HCT116 (cell line): ENCODE measurements at regions of chr7 and their contacts with region 1.

Region 1: DNA sequence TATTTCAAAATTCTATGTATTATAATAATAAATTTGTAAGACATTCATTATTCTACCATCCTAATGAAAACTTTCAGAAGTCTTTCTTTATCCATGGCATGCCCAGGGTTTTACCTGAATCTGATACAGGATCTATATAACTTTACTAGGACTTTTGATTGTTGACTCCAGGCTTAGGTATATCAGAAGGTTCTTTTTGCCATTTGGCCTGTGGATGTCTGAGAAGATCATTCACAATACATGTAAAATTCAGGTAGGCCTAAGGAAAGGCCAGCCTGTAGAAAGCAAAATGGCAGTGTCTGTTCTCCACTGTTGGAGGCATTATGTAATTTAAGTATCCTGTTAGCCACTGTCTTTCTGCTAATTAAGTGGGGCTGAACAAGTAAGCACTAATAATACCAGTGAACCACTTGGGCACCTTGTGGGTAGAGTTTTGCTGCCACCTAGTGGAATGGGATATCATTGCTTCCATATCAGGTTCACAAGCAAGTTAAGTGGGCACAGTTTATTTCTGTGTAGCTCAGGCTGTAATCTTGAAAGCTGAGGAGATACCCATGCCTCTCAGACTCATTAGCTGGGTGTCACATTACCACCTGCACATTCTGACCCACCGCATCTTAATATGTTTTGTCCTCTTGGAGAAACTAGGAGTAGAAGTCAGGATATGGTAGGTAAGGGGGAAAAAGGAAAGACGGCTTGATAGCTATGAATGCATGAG is 105.5 kb downstream of the SEPTIN7 start:
- DNase-seq: peak; percentile 66
- ATAC-seq: peak; percentile 96
- H3K4me3 ChIP-seq: no peak overlapping the region
- H3K27ac ChIP-seq: no peak overlapping the region
- H3K4me1 ChIP-seq: no peaks in the 10 kb centered on the region
- H3K27me3 ChIP-seq: no peaks in the 10 kb centered on the region
- CTCF ChIP-seq: peak; percentile 71 to 90 (median 82)
- POLR2A ChIP-seq: no peak
- RAD21 ChIP-seq: peak; percentile 93

Region 2: DNA sequence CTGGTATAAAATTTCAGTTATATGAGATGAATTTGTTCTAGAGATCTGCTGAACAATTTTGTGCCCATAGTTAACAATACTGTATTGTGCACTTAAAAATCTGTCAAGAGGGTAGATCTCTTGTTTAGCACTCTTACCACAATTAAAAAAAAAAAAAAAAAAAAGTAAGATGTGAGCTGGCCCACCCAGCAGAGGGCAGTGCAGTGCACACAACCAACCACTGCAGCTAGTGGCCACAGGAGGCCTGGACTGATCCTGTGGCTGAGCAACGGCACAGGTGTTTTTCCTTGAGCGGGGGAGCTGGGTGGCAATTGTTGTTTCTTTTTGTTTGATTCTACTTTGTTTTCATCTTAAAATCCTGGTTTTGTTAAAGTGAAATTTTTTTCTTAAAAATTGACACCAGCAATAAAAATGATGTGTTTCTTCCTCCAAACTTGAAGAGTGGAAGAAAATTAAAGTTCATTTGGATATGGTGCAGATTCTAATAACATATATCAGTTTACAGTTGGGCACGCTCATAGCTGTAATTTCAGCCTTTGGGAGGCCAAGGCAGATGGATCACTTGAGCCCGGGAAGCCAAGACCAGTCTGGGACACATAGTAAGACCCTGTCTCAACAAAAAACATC is 481.4 kb before region 1 on chr7:
- CTCF ChIA-PET with region 1: no interaction called
- POLR2A ChIA-PET with region 1: no interaction called
- RAD21 ChIA-PET with region 1: no interaction called
- intact Hi-C with region 1: loop called (anchors 2 kb)
- DNase-seq: peak; percentile 43
- ATAC-seq: peak; percentile 95
- H3K4me3 ChIP-seq: no peak overlapping the region
- H3K27ac ChIP-seq: no peak overlapping the region
- H3K4me1 ChIP-seq: no peaks in the 10 kb centered on the region
- H3K27me3 ChIP-seq: peaks cover 9% of the 10 kb centered on the region; the same call in 1 of the 2 replicates
- CTCF ChIP-seq: peak; percentile 81 to 86 (median 84)
- POLR2A ChIP-seq: no peak
- RAD21 ChIP-seq: peak; percentile 73

Region 3: DNA sequence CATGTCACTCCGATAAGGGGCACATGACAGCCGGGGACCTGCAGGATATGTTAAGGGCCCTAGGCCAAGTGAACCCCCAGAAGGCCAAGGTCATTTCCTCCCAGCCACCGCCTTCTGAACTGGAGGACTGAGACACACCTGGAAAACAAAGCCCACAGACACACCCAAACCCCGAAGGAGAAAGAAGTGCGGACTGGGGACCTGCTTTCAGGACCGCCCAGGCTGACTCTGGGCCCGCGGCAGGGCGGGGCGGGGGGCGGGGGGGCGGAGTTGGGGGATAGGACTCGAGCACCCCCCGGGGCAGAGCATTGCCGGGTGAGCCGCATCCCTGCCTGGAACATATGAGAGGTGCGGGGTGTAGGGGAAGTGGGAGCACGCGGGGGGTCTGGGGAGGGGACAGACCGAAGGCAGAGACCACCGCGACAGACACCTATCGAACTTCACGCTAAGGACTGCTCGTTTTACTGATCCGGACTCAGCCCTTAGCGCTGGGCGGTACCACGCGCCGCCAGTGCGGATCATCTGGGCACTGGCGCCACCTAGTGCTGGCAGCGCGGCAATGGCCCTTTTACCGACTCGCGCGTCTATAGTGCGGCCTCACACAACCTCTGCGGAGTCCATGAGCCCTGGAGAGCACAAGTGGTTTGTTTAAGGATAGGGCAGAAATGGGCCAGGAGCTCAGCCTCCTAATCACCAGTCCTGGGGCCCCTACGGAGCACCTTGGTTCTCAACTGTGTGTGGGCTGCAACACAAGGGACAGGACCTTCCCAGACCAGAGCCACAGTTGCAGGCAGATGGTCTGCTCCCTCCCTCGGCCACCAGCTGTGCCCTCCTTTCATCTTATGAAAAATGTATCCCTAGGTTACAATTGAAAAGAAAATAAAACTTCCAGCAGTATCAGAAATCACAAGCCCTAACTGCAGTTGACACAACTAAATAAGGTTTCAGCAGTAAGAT is 369.0 kb before region 1 on chr7:
- CTCF ChIA-PET with region 1: no interaction called
- POLR2A ChIA-PET with region 1: no interaction called
- RAD21 ChIA-PET with region 1: no interaction called
- intact Hi-C with region 1: loop called (anchors 2 kb)
- DNase-seq: peak; percentile 53
- ATAC-seq: peak; percentile 99
- H3K4me3 ChIP-seq: peak overlapping the region; percentile 28 to 40
- H3K27ac ChIP-seq: no peak overlapping the region
- H3K4me1 ChIP-seq: peaks cover 0 to 11% of the 10 kb centered on the region in 2 experiments; a peak in 1 of 4 replicates
- H3K27me3 ChIP-seq: no peaks in the 10 kb centered on the region
- CTCF ChIP-seq: peak; percentile 78 to 92 (median 91)
- POLR2A ChIP-seq: no peak
- RAD21 ChIP-seq: peak; percentile 88

Region 4: GRCh38 chr7:35624299-35625186 is 281.8 kb before region 1 on chr7:
- CTCF ChIA-PET with region 1: interaction called, 5 read pairs
- POLR2A ChIA-PET with region 1: no interaction called
- RAD21 ChIA-PET with region 1: no interaction called
- intact Hi-C with region 1: loop called (anchors 2 kb)
- DNase-seq: peak; percentile 23
- ATAC-seq: peak; percentile 91
- H3K4me3 ChIP-seq: no peak overlapping the region
- H3K27ac ChIP-seq: no peak overlapping the region
- H3K4me1 ChIP-seq: no peaks in the 10 kb centered on the region
- H3K27me3 ChIP-seq: no peaks in the 10 kb centered on the region
- CTCF ChIP-seq: peak; percentile 63 to 94 (median 80); a peak in 5 of 6 replicates
- POLR2A ChIP-seq: no peak
- RAD21 ChIP-seq: peak; percentile 86

Region 5: DNA sequence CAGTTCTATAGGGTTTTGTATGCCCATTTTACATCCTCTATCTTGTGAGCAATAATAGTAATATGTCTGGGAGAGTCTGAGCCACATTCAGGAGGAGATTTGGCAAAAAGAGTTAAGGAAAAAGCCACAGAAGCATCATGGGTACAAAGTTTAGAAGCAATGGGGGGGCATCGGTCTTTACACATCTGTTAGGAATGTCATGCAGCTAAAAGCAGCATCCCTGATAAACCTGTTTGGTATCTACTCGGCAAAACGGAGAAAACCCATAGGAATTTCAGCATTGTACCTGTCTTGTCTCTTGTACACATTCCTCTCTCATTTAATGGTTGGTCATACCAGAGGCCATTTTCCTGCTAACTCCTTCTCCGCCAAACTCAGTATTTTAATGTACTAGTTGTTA is 198.9 kb before region 1 on chr7:
- CTCF ChIA-PET with region 1: interaction called, 31 read pairs
- POLR2A ChIA-PET with region 1: no interaction called
- RAD21 ChIA-PET with region 1: interaction called, 3 read pairs
- intact Hi-C with region 1: loop called (anchors 1 kb)
- DNase-seq: no peak
- ATAC-seq: no peak
- H3K4me3 ChIP-seq: no peak overlapping the region
- H3K27ac ChIP-seq: no peak overlapping the region
- H3K4me1 ChIP-seq: peaks cover 5 to 17% of the 10 kb centered on the region in 2 experiments; a peak in 3 of 4 replicates
- H3K27me3 ChIP-seq: no peaks in the 10 kb centered on the region
- CTCF ChIP-seq: no peak
- POLR2A ChIP-seq: no peak
- RAD21 ChIP-seq: no peak

Region 6: DNA sequence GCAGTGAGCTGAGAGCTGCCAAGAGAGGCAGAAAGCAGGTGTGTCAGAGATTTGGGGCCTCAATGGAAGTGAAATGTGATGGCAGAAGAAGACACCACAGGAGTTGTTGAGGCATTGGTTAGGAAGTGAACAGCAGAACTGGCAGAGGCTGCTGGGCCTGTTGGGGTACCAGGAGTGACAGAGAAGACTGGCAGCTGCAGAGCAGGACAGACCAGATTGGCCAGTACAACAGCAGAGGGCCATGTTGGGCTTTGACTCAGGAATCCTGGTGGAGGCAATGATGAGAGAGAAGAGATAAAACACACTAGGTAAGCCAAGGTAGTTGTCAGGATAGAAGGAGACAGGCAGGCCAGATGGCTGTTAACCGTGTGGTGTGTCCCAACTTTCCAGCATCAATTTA is 191.5 kb before region 1 on chr7:
- CTCF ChIA-PET with region 1: interaction called, 31 read pairs
- POLR2A ChIA-PET with region 1: no interaction called
- RAD21 ChIA-PET with region 1: interaction called, 3 read pairs
- intact Hi-C with region 1: no loop called
- DNase-seq: no peak
- ATAC-seq: no peak
- H3K4me3 ChIP-seq: no peak overlapping the region
- H3K27ac ChIP-seq: no peak overlapping the region
- H3K4me1 ChIP-seq: peaks cover 0 to under 1% of the 10 kb centered on the region in 2 experiments; a peak in 1 of 4 replicates
- H3K27me3 ChIP-seq: no peaks in the 10 kb centered on the region
- CTCF ChIP-seq: no peak
- POLR2A ChIP-seq: no peak
- RAD21 ChIP-seq: no peak; the same call in 1 of the 2 replicates